ENCODE measurements at regions of chr11 and their contacts with region 1.

Region 1: DNA sequence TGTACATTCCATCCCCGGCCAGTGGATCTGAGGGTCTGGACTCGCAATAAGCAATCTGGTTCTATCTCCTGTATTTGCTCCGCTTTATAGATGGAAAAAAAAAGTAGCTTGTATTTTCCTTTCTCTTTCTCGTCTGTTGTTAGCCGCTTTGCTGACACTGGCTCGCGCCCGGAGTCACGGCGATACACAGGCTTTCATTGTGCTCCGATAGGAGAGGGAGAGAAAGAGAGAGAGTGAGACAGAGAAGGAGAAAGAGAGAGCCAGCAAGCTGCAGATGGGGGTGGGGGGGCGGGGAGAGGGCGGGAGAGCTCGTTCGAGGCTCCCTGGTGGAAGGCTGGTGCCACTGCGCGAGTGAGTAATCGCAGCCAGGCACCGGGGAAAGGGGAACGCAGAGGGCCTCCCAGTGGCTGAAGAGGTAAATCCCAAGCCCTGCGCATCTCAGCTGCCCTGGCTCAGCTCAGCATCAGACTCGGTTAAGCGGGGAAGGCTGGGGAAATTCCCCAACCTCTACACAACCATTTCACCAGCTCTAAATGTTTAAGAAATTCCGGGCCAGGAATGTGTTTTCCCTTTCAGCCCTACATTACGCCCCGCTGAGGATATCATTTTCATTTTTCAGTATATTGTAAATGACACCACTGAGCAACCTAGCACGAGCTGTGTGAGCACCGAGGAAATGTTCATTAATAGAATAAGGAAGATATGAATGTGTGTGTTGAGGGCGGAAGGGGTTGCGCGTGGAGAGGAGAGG is at the start of gene MAML2:
- DNase-seq: peak; percentile 97
- H3K4me3 Mint-ChIP-seq: peak within 1 kb of the TSS; percentile 98
- H3K27ac Mint-ChIP-seq: peak within 1 kb of the TSS; percentile 94
- H3K4me1 Mint-ChIP-seq: peaks cover 22% of the 10 kb centered on the region
- H3K27me3 Mint-ChIP-seq: no peaks in the 10 kb centered on the region
- total RNA-seq, gene MAML2: 26.6 to 28.1 TPM

Region 2: GRCh38 chr11:95680169-95680929 is 662.8 kb before region 1 on chr11:
- CTCF ChIA-PET with region 1: no interaction called
- intact Hi-C with region 1: no loop called
- DNase-seq: no peak
- H3K4me3 Mint-ChIP-seq: peak overlapping the region; percentile 32
- H3K27ac Mint-ChIP-seq: peak overlapping the region; percentile 48
- H3K4me1 Mint-ChIP-seq: peaks cover 88% of the 10 kb centered on the region
- H3K27me3 Mint-ChIP-seq: no peaks in the 10 kb centered on the region

Region 3: GRCh38 chr11:95849087-95849825 is 493.9 kb before region 1 on chr11:
- CTCF ChIA-PET with region 1: interaction called, 7 read pairs
- intact Hi-C with region 1: loop called (anchors 1 kb)
- DNase-seq: peak; percentile 65
- H3K4me3 Mint-ChIP-seq: no peak overlapping the region
- H3K27ac Mint-ChIP-seq: no peak overlapping the region
- H3K4me1 Mint-ChIP-seq: no peaks in the 10 kb centered on the region
- H3K27me3 Mint-ChIP-seq: no peaks in the 10 kb centered on the region

Region 4: DNA sequence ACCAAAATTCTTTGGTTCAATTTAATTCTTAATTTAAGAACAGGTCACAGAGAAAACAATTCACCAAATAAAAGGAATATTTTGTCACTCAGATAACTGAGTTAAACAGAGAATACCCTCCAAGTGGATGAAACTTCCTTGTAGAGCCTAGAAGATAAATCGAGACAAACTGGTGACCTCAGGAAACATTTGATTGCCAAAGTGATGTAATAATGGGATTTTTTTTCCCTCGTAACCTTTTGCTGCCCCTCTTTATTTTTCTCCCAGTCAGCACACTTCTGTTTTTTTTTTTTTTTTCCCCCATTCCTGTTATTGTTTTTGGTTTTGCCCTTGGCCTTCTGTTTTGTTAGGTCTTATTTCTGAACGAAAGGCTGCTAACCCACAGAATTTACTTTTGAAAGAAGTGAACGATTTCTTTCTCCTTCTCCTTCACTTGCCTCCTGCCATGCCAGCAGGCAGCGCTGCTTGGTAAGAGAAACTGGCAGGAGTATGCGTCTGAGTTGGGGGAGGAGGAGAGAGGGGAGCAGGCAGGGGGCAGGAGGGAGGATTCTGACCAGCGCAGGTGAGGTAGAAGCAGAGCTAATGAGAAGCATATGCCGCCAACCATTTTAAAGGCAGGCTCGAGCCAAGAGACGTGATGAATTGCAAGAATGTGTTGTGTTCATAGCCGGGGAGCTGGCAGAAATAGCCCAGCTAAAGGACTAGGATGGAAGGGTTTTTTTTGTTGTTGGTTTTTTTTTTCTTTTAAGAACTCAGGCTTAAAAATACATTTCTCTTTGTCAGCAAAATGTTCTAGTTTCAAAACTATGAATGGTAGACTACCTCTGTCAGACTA is 297.3 kb before region 1 on chr11:
- CTCF ChIA-PET with region 1: no interaction called
- intact Hi-C with region 1: no loop called
- DNase-seq: no peak
- H3K4me3 Mint-ChIP-seq: no peak overlapping the region
- H3K27ac Mint-ChIP-seq: peak overlapping the region; percentile 12
- H3K4me1 Mint-ChIP-seq: peaks cover 51% of the 10 kb centered on the region
- H3K27me3 Mint-ChIP-seq: no peaks in the 10 kb centered on the region

Region 5: GRCh38 chr11:96062134-96062533 is 281.0 kb before region 1 on chr11:
- CTCF ChIA-PET with region 1: interaction called, 11 read pairs
- intact Hi-C with region 1: loop called (anchors 1 kb)
- DNase-seq: peak; percentile 76
- H3K4me3 Mint-ChIP-seq: peak overlapping the region; percentile 13
- H3K27ac Mint-ChIP-seq: peak overlapping the region; percentile 94
- H3K4me1 Mint-ChIP-seq: peaks cover 78% of the 10 kb centered on the region
- H3K27me3 Mint-ChIP-seq: no peaks in the 10 kb centered on the region

Region 6: GRCh38 chr11:96207459-96208449 is 135.4 kb before region 1 on chr11:
- CTCF ChIA-PET with region 1: interaction called, 13 read pairs
- intact Hi-C with region 1: loop called (anchors 1 kb)
- DNase-seq: peak; percentile 49
- H3K4me3 Mint-ChIP-seq: peak overlapping the region; percentile 40
- H3K27ac Mint-ChIP-seq: peak overlapping the region; percentile 98
- H3K4me1 Mint-ChIP-seq: peaks cover 88% of the 10 kb centered on the region
- H3K27me3 Mint-ChIP-seq: no peaks in the 10 kb centered on the region

Region 7: DNA sequence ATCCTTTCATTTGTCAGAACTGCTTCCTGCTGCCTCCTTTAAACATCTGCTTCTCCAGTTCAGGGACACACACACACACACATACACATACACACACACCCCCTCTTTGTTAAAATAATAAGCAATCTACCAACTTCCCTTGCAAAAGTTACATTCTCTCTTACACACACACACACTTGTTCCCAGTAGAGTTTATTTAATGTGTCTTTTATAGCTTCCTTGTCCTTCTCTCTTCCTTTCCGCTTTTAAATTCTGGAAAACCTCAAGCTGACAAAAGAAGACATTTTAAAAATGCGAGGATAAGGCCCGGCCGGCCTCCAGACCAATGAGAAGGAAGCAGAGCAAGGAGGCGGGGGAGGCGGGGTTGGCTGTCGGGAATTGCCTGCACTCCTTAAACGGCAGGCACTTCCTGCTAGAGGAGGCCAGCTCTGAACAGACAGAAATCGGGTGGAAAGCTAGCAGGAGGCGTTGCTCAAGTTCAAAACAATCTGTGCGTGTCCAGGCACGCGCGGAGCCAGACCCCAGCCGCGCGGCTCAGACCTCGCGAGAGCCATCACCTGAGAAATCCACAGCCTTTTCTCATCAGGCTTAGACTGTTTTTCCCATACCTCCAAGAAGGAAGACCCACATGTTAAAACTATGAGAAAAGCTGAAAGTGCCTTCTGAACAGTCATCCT is 100.0 kb before region 1 on chr11:
- CTCF ChIA-PET with region 1: interaction called, 41 read pairs
- intact Hi-C with region 1: loop called (anchors 1 kb)
- DNase-seq: peak; percentile 94
- H3K4me3 Mint-ChIP-seq: peak overlapping the region; percentile 84
- H3K27ac Mint-ChIP-seq: peak overlapping the region; percentile 95
- H3K4me1 Mint-ChIP-seq: peaks cover 54% of the 10 kb centered on the region
- H3K27me3 Mint-ChIP-seq: no peaks in the 10 kb centered on the region

Region 8: GRCh38 chr11:96293598-96294021 is 49.5 kb before region 1 on chr11:
- CTCF ChIA-PET with region 1: interaction called, 14 read pairs
- intact Hi-C with region 1: loop called (anchors 1 kb)
- DNase-seq: no peak
- H3K4me3 Mint-ChIP-seq: peak overlapping the region; percentile 1
- H3K27ac Mint-ChIP-seq: no peak overlapping the region
- H3K4me1 Mint-ChIP-seq: peaks cover 78% of the 10 kb centered on the region
- H3K27me3 Mint-ChIP-seq: no peaks in the 10 kb centered on the region

Region 9: GRCh38 chr11:96389720-96390487 is 46.8 kb after region 1 on chr11 and contains the starts of genes CCDC82 and JRKL:
- CTCF ChIA-PET with region 1: interaction called, 24 read pairs
- intact Hi-C with region 1: loop called (anchors 1 kb)
- DNase-seq: peak; percentile 99
- H3K4me3 Mint-ChIP-seq: peak within 1 kb of the TSS; percentile 89
- H3K27ac Mint-ChIP-seq: peak within 1 kb of the TSS; percentile 91
- H3K4me1 Mint-ChIP-seq: peaks cover 58% of the 10 kb centered on the region
- H3K27me3 Mint-ChIP-seq: no peaks in the 10 kb centered on the region
- total RNA-seq, gene CCDC82: 32.0 to 34.0 TPM
- total RNA-seq, gene JRKL: 12.3 to 12.7 TPM

Measured in activated naive CD4-positive, alpha-beta T cell treated with anti-CD3 and anti-CD28 coated beads for 36 hours (primary cell).